Aorta (tissue), 5 donors: ENCODE measurements at regions of chr10 and their contacts with region 1.

Region 1: DNA sequence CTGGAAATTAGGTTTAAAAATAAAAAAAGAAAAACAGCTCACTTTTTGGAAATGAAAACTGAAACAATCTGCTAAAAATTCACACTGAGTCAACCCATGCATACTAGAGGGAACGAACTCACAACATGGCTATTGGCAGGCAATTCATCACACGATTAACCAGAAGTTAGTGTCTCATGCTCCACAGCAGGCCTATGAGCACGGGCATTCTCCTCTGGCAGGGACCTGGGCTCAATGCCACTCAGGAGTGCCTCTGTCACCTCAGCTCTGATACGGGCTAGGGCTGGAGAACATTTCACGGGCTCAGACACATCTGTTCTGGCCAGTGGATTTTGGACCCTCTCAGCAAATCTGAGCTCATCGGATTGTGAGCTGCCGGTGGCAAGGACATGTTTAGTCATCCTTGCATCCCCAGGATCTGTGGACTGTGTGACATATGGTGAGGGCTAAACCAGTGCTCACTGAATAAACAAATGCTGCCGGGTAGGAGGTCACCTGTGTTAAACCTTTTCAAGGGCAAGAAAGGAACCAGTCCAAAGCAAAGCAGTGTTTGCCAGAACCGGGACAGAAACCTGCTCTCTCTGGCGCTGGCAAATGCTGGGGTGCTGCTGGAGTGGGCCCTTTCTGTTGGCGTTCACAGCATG is 40.1 kb downstream of the POLR3A start:
- DNase-seq: peak; percentile 75 to 85
- ATAC-seq: peak; percentile 73
- H3K4me3 ChIP-seq: no peak overlapping the region
- H3K27ac ChIP-seq: peak overlapping the region; percentile 71 to 98
- H3K4me1 ChIP-seq: peaks cover 5 to 8% of the 10 kb centered on the region in 2 donors
- H3K27me3 ChIP-seq: no peaks in the 10 kb centered on the region

Region 2: DNA sequence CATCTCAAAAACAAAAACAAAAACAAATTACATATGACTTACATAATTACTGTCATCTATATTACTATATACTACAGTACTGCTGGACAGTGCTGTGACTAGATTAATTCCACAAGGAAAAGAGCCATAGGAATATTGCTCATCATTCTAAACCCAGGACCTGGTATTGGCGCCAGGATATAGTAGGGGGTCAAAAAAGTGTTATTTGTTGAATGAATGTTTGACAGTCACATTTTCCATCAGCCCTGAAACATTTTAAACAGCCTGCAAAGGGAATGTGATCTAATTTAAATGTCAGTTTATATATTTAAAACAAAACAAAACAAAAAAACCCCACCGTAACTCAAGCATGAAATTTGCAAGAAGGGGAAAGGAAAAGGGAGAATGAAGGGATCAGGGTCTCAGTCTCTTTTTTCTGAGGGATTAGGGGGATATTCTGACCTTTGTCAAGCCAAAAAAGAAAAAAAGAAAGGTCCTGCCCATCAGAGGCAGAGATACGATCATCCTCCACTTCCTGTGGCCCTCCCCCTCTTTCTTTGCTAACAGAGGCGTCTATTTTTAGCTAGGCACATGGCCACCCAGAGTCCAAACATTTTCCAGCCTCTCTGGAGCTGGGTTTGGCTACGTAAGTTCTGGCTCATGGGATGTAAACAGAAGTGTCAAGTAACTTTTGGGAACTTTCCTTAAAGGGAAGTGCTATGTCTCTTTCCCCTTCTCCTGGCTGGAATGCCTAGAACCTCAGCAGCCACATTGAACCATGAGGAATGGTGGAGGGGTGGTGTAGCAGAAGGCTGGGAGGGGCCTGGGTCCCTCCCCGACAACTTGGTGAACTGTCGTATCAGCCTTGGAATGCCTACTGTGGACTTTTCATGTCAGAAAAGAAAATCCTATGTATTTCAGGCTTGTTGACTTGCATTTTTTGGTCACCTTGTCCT is 18.1 kb before region 1 on chr10:
- intact Hi-C with region 1: loop called in 1 of 2 experiments (anchors 2 kb)
- DNase-seq: peak; percentile 82 to 86
- ATAC-seq: peak; percentile 87
- H3K4me3 ChIP-seq: no peak overlapping the region
- H3K27ac ChIP-seq: peak overlapping the region; percentile 9 to 53
- H3K4me1 ChIP-seq: peaks cover 3% of the 10 kb centered on the region in 2 donors
- H3K27me3 ChIP-seq: no peaks in the 10 kb centered on the region